ENCODE measurements at regions of chr1 and their contacts with region 1.

Region 1: DNA sequence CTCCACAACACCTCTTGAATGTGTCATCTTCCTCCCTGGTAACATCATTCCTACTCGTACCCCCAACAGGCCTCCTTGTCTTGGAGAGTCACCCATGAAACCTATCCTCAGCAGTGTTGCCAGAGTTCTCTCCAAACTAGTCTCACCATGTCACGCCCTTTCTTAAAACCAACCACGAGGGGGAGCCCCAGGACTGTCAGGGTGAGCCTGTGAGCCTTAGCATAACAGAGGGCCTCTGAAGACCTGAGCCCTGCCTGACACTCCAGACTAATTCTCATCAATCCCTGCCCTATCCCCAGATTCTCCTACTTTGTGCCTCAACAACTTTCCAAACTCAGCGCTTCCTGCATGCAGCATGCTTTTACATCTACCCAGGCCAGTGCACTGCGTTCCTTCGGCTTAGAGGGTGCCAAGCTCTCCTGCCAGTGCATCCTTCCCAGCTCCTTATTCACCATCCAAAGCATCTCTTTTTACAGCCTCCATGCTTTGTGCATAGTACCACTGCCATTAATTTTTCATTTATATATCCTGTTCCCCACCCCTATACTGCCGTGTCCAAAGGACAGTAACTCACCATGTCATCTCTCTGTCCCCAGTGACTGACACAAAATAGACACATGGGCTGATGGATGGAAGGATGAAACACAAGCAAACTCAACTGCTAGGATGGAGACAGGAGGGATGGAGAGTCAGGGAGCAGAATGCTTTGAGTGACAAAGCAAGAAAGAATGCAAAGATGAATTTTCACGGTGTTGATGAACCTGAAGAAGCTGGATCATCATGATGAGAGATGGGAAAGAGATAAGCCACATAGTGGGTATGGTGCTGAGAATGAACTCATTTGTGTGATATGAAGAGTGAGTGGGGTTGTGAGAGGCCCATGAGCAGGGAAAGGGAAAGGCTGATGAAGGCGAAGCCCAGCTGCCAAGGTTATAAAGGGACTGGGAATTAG is 34.0 kb downstream of the ZNF697 start:
- DNase-seq: peak in 1 of 2 donors; percentile 68
- ATAC-seq: peak in 2 of 3 donors; percentile 52 to 67
- H3K4me3 ChIP-seq: no peak overlapping the region
- H3K4me3 Mint-ChIP-seq: no peak overlapping the region
- H3K27ac ChIP-seq: no peak overlapping the region
- H3K27ac Mint-ChIP-seq: no peak overlapping the region
- H3K4me1 ChIP-seq: no peaks in the 10 kb centered on the region
- H3K4me1 Mint-ChIP-seq: peaks cover 3 to 4% of the 10 kb centered on the region in 2 donors
- H3K27me3 ChIP-seq: no peaks in the 10 kb centered on the region
- H3K27me3 Mint-ChIP-seq: peaks cover 0 to 4% of the 10 kb centered on the region in 2 donors
- CTCF ChIP-seq: peak; percentile 18

Region 2: DNA sequence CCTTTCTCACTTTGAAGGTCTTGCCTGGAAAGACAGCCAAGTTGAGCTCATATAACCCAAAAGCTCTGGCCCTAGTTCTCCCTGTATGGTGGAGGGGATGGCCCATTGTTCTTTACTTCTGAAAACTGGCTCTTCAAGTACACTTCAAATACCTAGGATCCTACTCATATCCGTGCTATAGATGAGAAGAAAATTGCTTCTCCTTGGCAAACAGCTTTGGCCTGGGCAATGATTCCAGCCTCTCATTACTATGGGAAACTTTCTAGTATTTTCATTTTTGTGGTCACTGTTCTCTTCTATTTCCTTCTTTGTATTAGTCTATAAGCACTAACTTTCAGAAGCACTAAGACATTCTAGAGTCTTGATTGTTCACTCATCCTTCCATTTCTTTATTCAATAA is 19.7 kb before region 1 on chr1:
- intact Hi-C with region 1: no loop called
- DNase-seq: no peak
- ATAC-seq: no peak
- H3K4me3 ChIP-seq: no peak overlapping the region
- H3K4me3 Mint-ChIP-seq: no peak overlapping the region
- H3K27ac ChIP-seq: no peak overlapping the region
- H3K27ac Mint-ChIP-seq: no peak overlapping the region
- H3K4me1 ChIP-seq: no peaks in the 10 kb centered on the region
- H3K4me1 Mint-ChIP-seq: no peaks in the 10 kb centered on the region
- H3K27me3 ChIP-seq: no peaks in the 10 kb centered on the region
- H3K27me3 Mint-ChIP-seq: peaks cover 0 to 6% of the 10 kb centered on the region in 2 donors
- CTCF ChIP-seq: no peak

Region 3: GRCh38 chr1:119675349-119676345 is 61.6 kb after region 1 on chr1:
- intact Hi-C with region 1: loop called (anchors 1 kb)
- DNase-seq: peak; percentile 17 to 80
- ATAC-seq: peak in 2 of 3 donors; percentile 51 to 67
- H3K4me3 ChIP-seq: no peak overlapping the region
- H3K4me3 Mint-ChIP-seq: peak overlapping the region; percentile 71
- H3K27ac ChIP-seq: no peak overlapping the region
- H3K27ac Mint-ChIP-seq: no peak overlapping the region
- H3K4me1 ChIP-seq: peaks cover 6% of the 10 kb centered on the region
- H3K4me1 Mint-ChIP-seq: peaks cover 6 to 13% of the 10 kb centered on the region in 2 donors
- H3K27me3 ChIP-seq: no peaks in the 10 kb centered on the region
- H3K27me3 Mint-ChIP-seq: peaks cover 8 to 28% of the 10 kb centered on the region in 2 donors
- CTCF ChIP-seq: peak; percentile 66

Measured in natural killer cell (primary cell).